Endothelial cell of umbilical vein (primary cell): ENCODE measurements at regions of chr1 and their contacts with region 1.

Region 1: DNA sequence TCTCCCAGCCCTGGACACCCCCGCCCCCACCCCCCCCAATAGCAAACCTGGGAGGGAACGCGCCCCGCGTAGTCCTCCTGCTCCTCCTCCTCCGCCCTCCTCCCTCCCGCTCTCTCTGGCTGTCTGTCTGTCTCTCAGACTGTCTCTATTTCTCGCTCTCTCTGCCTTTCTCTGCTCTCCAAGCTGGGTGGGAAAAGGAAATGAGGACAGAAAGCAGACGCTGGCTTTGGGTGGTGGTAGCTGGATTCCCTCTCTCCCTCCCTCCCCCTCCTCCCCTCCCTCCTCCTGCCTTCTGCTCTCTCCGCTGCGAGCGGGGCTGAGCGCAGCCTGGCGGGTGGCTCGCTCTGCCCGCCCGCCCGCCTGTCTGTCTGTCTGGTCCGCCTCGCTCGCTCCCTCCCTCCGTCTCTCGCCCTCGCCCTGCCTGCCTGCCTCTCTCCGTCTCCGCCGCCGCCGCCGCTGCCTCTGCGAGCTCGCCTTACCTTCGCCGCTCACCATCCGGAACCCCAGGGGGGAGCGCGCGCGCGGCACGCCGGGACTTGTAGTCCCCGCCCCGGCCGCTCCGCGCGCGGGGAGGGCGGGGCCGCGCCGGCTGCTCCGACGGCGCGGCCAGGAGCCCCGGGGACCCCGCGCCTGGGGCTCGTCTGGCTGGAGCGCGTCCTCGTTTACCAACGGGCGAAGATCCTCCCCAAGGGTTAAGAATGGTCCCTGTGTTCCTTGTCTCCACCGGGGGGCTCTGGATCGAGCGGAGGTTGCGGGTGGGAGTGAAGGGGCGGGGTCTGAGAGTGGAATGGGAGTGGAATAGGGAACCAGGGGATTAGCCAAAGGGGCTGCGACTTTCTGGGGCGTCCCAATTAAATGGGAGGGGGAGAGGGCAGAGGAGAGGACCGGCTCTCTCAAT is at the start of gene AHDC1:
- DNase-seq: peak; percentile 88
- H3K4me3 ChIP-seq: peak within 1 kb of the TSS; percentile 60 to 97 (median 71)
- H3K27ac ChIP-seq: no peak within 1 kb of the TSS
- H3K4me1 ChIP-seq: peaks cover 15% of the 10 kb centered on the region
- H3K27me3 ChIP-seq: no peaks in the 10 kb centered on the region
- CTCF ChIP-seq: no peak
- POLR2A ChIP-seq: peak; percentile 48
- total RNA-seq, gene AHDC1: 32.1 and 33.0 TPM in 2 replicates

Region 2: DNA sequence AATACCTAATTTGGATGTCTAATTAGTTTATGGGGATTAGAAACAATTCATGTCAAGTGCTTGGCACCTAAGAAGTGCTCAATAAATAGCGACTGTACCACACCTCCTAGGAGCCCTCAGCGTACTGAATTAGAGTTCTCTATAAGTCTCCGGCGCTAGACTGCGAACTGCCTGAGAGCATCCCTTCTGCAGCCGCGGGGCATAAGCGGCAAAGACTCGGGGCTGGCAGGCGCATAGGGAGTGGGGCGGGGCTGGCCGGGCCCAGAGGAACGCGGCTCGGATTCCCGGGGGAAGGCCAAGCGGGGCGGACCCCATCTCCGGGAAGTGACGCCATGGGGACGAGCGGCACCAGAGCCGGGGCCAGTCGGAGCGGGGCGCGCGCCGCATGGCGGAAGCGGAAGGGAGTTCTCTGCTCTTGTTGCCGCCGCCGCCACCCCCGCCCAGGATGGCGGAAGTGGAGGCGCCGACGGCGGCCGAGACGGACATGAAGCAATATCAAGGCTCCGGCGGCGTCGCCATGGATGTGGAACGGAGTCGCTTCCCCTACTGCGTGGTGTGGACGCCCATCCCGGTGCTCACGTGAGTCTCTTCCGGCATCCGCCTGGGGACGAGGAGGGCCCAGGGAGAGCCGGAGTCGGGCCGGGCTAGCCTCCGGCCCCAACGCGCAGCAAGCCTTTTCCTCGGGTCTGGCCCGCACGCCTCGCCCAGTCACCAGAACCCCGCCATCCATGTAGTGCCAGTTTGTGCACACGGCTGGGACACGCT is 281.9 kb before region 1 on chr1 and contains the start of gene TMEM222:
- CTCF ChIA-PET with region 1: interaction called, 3 read pairs
- POLR2A ChIA-PET with region 1: no interaction called
- dilution Hi-C with region 1: no loop called
- intact Hi-C with region 1: loop called (anchors 1 kb)
- DNase-seq: peak; percentile 97
- H3K4me3 ChIP-seq: peak within 1 kb of the TSS; percentile 47 to 82 (median 68)
- H3K27ac ChIP-seq: peak within 1 kb of the TSS; percentile 77
- H3K4me1 ChIP-seq: peaks cover 11% of the 10 kb centered on the region
- H3K27me3 ChIP-seq: no peaks in the 10 kb centered on the region
- CTCF ChIP-seq: no peak
- POLR2A ChIP-seq: peak; percentile 94
- total RNA-seq, gene TMEM222: 43.1 and 45.8 TPM in 2 replicates

Region 3: GRCh38 chr1:27392096-27392777 is 211.7 kb before region 1 on chr1 and contains the start of gene GPR3:
- CTCF ChIA-PET with region 1: interaction called, 61 read pairs
- POLR2A ChIA-PET with region 1: no interaction called
- dilution Hi-C with region 1: no loop called
- intact Hi-C with region 1: loop called (anchors 1 kb)
- DNase-seq: peak; percentile 93
- H3K4me3 ChIP-seq: peak within 1 kb of the TSS; percentile 46 to 80 (median 70)
- H3K27ac ChIP-seq: peak within 1 kb of the TSS; percentile 73
- H3K4me1 ChIP-seq: peaks cover 21% of the 10 kb centered on the region
- H3K27me3 ChIP-seq: no peaks in the 10 kb centered on the region
- CTCF ChIP-seq: peak; percentile 66 to 72
- POLR2A ChIP-seq: no peak
- total RNA-seq, gene GPR3: 1.8 and 2.4 TPM in 2 replicates

Region 4: GRCh38 chr1:27416387-27417111 is 187.4 kb before region 1 on chr1:
- CTCF ChIA-PET with region 1: interaction called, 74 read pairs
- POLR2A ChIA-PET with region 1: no interaction called
- dilution Hi-C with region 1: loop called (anchors 25 kb)
- intact Hi-C with region 1: loop called (anchors 1 kb)
- DNase-seq: peak; percentile 80
- H3K4me3 ChIP-seq: no peak overlapping the region
- H3K27ac ChIP-seq: no peak overlapping the region
- H3K4me1 ChIP-seq: peaks cover 5% of the 10 kb centered on the region
- H3K27me3 ChIP-seq: no peaks in the 10 kb centered on the region
- CTCF ChIP-seq: peak; percentile 75 to 76
- POLR2A ChIP-seq: no peak

Region 5: DNA sequence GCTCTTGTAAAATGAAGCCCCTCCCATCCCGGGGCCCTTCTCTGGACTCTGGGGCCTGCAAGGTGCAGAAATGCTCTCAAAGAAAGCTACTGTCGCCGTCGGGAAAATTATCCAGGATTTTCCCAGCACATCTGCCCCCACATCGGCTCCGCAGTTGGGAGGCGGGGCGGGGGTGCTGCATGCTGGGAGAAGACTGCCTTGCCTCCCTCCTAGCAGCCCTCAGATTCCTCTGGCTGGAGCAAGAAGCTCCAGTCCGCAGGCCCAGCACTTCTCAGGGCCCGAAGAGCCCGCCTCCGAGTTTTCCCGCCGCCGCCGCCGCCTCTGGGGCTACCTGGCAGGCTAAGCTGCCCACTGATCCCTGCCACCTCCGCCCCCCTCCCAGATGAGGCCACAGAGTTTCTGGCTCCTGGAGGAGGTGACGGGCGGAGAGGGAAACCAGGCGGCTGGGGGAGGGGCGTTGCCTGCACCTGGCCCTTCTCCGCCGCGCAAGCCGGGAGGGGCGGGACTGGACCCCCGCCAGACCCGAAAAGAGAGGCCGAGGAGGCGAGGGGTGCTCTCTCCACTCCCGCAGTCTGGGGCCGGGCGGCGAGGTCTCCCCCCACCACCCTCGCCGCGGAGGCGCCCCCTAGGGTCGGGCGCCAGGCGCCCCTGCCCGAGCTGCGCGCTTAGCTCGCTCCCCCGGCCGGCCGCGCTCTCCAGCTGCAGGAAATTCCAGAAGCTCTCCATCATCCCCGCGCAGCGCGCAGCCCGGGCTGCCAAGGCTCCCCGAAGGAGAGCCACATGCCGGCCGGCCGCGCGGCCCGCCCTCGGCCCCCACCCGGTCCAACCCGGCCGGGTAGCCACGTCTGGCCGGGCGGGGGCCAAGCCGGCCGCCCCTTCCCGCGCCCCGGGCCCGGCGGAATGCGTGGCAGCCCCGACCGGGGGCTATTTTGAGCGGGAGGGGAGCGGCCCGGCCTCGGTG is 28.8 kb before region 1 on chr1:
- CTCF ChIA-PET with region 1: interaction called, 37 read pairs
- POLR2A ChIA-PET with region 1: interaction called, 3 read pairs
- dilution Hi-C with region 1: no loop called
- intact Hi-C with region 1: loop called (anchors 1 kb)
- DNase-seq: peak; percentile 74
- H3K4me3 ChIP-seq: peak overlapping the region in 1 of 3 experiments; percentile 7
- H3K27ac ChIP-seq: peak overlapping the region; percentile 66
- H3K4me1 ChIP-seq: peaks cover 27% of the 10 kb centered on the region
- H3K27me3 ChIP-seq: no peaks in the 10 kb centered on the region
- CTCF ChIP-seq: peak; percentile 54 to 62
- POLR2A ChIP-seq: no peak

Region 6: DNA sequence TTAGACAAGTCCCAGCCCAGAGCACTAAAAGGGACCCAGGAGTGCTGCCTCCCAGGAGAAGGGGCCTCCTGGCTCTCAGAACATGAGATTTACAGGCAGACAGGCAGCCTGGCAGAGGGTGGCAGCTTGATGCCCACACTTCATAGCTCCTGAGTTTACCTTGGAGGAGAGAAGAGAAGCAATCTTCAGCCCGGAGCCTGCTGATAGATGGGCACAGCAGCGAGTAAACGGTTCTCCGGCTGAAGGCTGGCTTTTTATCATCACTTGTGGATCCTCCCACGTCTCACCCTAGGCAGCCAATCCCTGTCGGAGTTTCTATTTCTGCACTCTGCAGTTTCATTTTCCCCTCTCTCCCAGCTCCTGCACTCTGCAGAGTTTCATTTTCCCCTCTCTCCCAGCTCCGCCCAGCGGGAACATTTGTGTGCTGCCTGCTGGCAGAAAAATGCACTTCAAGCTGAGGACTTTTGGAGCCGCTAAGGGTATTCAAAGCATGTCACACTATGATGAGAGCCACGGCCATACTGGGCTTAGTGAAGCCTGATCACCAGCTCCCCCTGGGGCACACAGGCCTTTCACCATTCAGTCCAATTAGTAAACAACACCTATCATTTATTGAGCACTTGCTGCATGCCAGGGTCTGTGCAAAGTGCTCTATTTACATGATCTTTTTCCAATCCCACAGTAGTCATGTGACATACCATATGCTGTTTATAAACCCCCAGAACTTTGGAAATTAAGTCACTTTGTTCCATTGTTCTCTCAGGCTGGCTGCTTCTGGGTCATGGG is 68.2 kb after region 1 on chr1 and contains the start of gene IFI6:
- CTCF ChIA-PET with region 1: interaction called, 306 read pairs
- POLR2A ChIA-PET with region 1: no interaction called
- dilution Hi-C with region 1: no loop called
- intact Hi-C with region 1: no loop called
- DNase-seq: peak; percentile 98
- H3K4me3 ChIP-seq: peak within 1 kb of the TSS; percentile 18 to 74 (median 28)
- H3K27ac ChIP-seq: peak within 1 kb of the TSS; percentile 53
- H3K4me1 ChIP-seq: peaks cover 20% of the 10 kb centered on the region
- H3K27me3 ChIP-seq: no peaks in the 10 kb centered on the region
- CTCF ChIP-seq: peak; percentile 34 to 43
- POLR2A ChIP-seq: peak; percentile 88
- total RNA-seq, gene IFI6: 20.0 and 28.4 TPM in 2 replicates